Right cardiac atrium (tissue), 5 donors: ENCODE measurements at regions of chr16 and their contacts with region 1.

Region 1: GRCh38 chr16:2905431-2906387 is 6.0 kb upstream of the FLYWCH1 start:
- DNase-seq: peak; percentile 100
- ATAC-seq: peak; percentile 93 to 94
- H3K4me3 ChIP-seq: peak overlapping the region; percentile 64
- H3K27ac ChIP-seq: no peak overlapping the region
- H3K4me1 ChIP-seq: no peaks in the 10 kb centered on the region
- H3K27me3 ChIP-seq: no peaks in the 10 kb centered on the region

Region 2: DNA sequence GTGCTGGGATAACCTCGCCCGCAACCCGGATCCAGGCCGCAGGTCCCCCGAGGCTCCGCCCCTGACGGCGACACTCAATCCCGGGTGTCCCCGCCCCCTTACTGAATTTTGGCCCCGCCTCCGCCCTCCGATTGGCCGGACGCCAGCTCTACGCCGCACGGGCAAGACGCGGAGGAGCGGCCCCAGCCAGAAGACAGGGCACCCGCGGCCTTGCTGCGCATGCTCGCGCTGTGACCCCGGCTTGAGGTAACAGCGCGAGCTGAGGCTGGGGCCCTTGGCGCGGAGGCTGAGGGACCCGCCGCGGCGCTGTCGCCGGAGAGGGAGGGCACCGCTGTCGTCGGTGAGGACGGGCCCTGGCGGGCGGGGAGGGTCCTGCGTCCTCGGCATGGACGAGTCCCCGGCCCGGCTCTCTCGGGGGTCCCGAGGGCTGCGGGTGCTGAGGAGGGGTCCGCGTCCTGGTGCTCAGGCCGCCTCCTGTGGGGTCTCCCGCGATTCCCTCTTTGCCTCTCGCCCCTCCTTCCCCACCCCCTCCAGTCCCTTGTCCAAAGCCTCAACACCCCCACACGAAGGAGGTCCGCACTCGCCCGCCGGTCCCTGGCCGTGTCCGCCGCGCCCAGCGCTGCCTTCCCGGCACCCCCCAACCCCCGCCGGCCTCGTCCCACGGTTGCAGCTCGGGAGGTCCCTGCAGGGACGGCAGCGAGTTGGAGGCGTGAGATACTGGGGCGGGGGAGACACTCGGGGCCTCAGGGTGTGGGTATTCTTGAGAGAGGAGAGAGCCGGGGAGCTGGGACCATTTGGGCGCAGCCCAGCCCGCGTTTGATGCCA is 22.5 kb before region 1 on chr16 and contains the start of gene FLYWCH2:
- intact Hi-C with region 1: loop called in 1 of 4 experiments (anchors 2 kb)
- DNase-seq: peak; percentile 97 to 100 (median 99)
- ATAC-seq: peak; percentile 91 to 92
- H3K4me3 ChIP-seq: peak within 1 kb of the TSS; percentile 62
- H3K27ac ChIP-seq: peak within 1 kb of the TSS; percentile 87
- H3K4me1 ChIP-seq: peaks cover 2% of the 10 kb centered on the region
- H3K27me3 ChIP-seq: no peaks in the 10 kb centered on the region
- total RNA-seq, gene FLYWCH2: 26.6 to 37.2 (median 29.1) TPM